Heart right ventricle (tissue), 16 donors: ENCODE measurements at regions of chr7 and their contacts with region 1.

Region 1: GRCh38 chr7:47945261-47946001 is 2.8 kb downstream of the PKD1L1 start:
- DNase-seq: peak; percentile 78 to 82
- ATAC-seq: peak in 1 of 8 donors; percentile 35
- H3K4me3 ChIP-seq: peak overlapping the region in 1 of 10 donors; percentile 9
- H3K27ac ChIP-seq: peak overlapping the region in 9 of 10 donors; percentile 53 to 97 (median 79)
- H3K4me1 ChIP-seq: peaks cover 8 to 91% (median 42%) of the 10 kb centered on the region in 9 donors
- H3K27me3 ChIP-seq: no peaks in the 10 kb centered on the region
- CTCF ChIP-seq: peak; percentile 70 to 99 (median 83)

Region 2: DNA sequence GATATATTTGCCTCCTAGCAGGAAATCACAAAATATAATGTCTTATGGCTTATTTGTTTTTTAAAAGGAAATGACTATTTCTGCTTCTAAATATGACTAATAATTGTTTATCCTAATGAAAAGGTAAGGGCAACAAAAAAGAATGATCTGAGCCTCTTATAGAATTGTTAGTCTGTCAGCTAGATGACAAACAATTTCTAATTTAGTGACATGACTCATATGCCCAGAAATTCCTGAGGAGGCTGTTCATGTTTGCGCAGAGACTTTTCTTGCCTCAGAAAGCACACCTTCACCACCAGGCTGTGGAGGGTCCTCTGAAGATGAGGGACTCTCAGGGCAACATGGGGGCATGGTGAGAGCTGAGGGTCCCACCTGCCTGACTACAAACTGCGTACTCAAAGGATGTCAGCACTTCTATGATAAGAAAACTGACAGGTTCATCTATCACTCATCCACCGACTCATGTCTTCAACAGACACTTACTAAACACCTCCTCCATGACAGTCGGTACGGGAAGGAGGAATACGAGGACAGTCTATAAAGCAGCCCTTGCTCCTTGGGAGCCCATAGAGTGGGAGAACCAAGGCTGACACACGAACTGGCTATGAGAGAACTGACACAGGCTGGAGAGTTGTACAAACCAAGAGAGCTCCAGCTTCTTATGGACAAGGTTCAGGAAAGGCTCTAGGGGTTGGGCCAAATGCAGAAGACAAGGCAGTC is 99.2 kb before region 1 on chr7:
- intact Hi-C with region 1: loop called in 2 of 10 experiments (anchors 5 kb)
- DNase-seq: no peak
- ATAC-seq: peak in 7 of 8 donors; percentile 42 to 82 (median 65)
- H3K4me3 ChIP-seq: no peak overlapping the region
- H3K27ac ChIP-seq: peak overlapping the region in 7 of 10 donors; percentile 8 to 42 (median 34)
- H3K4me1 ChIP-seq: peaks cover 0 to 25% (median 13%) of the 10 kb centered on the region in 9 donors
- H3K27me3 ChIP-seq: no peaks in the 10 kb centered on the region
- CTCF ChIP-seq: no peak

Region 3: DNA sequence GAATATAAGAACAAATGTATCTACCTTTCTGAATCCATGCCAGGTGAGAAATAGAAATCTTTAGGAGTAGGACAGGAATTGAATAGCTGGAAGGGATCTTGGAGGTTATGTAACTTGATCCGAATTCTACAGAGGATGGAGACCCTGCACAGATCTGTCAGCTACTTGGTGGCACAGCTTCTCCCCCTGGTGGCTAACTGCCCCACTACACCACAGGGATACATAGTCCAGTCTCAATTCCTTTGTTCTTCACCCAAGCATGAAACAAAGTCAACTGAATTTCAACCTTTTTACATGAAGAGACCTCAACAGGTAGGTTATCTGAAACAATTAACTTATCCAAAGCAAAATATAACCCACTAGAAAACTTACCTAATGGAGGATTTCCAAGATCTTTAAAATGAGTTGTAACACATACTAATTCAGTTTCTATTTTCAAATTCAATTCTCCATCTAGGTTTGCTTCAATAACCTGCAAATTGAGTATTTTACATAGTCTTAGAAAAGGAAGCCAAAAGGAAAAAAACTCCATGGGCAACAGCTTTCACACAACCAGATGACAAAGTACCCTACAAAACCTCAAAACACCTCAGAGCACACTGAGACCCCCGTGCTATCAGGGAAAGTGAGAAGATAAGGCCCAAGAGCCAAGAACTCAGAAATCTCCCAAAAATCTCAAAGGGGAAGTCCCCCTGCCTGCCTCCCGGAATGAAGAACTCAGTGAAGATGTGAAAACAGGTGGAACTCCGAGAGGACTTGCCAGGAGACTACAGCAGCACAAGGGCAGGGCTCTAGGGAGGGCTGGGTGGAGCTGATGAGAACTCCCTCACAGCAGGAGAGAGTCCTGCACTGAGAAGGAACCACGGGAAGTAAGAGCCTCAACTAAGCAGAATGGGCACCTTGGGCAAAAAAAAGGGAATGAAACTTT is 23.7 kb after region 1 on chr7:
- intact Hi-C with region 1: loop called in 5 of 10 experiments (anchors 1 to 2 kb)
- DNase-seq: peak; percentile 64 to 72
- ATAC-seq: peak; percentile 68 to 85 (median 74)
- H3K4me3 ChIP-seq: no peak overlapping the region
- H3K27ac ChIP-seq: peak overlapping the region in 5 of 10 donors; percentile 1 to 67 (median 17)
- H3K4me1 ChIP-seq: peaks cover 0 to 57% (median 21%) of the 10 kb centered on the region in 9 donors
- H3K27me3 ChIP-seq: no peaks in the 10 kb centered on the region
- CTCF ChIP-seq: peak; percentile 68 to 94 (median 89)